ENCODE measurements at regions of chr6 and their contacts with region 1.

Region 1: GRCh38 chr6:217048-217659 is 75.1 kb upstream of the DUSP22 start:
- DNase-seq: peak; percentile 55
- ATAC-seq: 0 out of 3 replicates have a peak, but pooled peaks have one; percentile 1
- H3K4me3 ChIP-seq: peak overlapping the region; percentile 13; the same call in 1 of the 2 replicates
- H3K27ac ChIP-seq: peak overlapping the region; percentile 94
- H3K4me1 ChIP-seq: peaks cover 86% of the 10 kb centered on the region
- H3K27me3 ChIP-seq: no peaks in the 10 kb centered on the region
- CTCF ChIP-seq: peak; percentile 57 to 73 (median 73)
- EP300 ChIP-seq: no peak
- POLR2A ChIP-seq: no peak
- RAD21 ChIP-seq: peak; percentile 54

Region 2: DNA sequence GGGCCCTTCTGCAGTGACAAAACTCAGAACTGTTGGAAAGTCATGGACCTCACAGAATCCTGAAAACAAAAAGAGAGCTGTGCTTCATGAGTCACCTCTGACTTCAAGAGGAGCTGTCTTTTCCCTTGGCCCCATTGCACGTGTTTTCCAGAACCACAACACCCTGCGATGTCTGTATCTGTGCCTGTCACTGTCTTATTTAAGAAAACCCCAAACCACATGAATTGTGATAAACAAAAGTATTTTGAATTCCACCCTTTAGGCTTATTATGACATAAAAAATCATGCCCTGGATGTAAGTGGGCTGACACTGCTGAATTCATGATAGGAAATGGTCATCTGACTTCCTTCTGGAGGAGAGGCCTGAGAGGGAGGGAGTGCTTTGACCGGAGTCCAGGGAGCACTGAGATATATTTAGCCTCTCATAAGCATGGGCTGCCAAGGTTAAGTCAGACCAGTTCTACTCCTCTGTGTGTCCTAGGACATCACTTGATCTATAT is 21.2 kb before region 1 on chr6:
- CTCF ChIA-PET with region 1: interaction called, 460 read pairs
- POLR2A ChIA-PET with region 1: interaction called, 139 read pairs
- RAD21 ChIA-PET with region 1: interaction called, 519 read pairs
- SMC1A ChIA-PET with region 1: interaction called, 748 read pairs
- in situ Hi-C with region 1: no loop called
- intact Hi-C with region 1: no loop called
- DNase-seq: no peak
- ATAC-seq: no peak
- H3K4me3 ChIP-seq: no peak overlapping the region
- H3K27ac ChIP-seq: no peak overlapping the region
- H3K4me1 ChIP-seq: peaks cover 48% of the 10 kb centered on the region
- H3K27me3 ChIP-seq: no peaks in the 10 kb centered on the region
- CTCF ChIP-seq: no peak
- EP300 ChIP-seq: no peak
- POLR2A ChIP-seq: no peak
- RAD21 ChIP-seq: no peak

Region 3: DNA sequence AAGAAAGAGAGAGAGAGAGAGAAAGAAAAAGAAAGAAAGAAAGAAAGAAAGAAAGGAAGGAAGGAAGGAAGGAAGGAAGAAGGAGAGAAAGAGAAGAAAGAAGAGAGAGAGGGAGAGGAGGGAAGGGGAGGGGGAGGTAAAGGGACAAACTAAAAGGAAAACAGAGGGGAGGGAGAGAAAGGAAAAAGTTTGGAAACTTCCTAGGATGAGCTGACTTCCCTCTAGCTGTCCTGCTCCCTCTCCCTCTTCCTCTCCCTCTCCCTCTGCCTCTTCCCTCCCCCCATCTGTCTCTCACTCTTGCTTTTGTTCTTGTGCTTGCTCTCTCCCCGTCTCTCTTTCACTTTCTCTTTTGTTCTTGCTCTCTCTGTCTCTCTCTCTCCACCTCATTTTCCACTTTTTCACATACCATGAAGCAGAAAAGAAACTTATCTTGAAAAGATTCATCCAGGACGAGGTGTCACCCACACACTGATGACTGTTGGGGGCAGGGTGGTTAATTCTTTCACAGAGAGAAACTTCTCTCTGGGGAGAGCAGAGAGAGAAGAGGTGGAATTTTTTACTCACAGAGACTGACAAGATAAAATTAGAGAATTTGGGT is 18.7 kb after region 1 on chr6:
- CTCF ChIA-PET with region 1: interaction called, 7 read pairs
- POLR2A ChIA-PET with region 1: interaction called, 6 read pairs
- RAD21 ChIA-PET with region 1: interaction called, 119 read pairs
- SMC1A ChIA-PET with region 1: interaction called, 22 read pairs
- in situ Hi-C with region 1: no loop called
- intact Hi-C with region 1: no loop called
- DNase-seq: peak; percentile 85
- ATAC-seq: peak; percentile 78
- H3K4me3 ChIP-seq: peak overlapping the region; percentile 16; the same call in 1 of the 2 replicates
- H3K27ac ChIP-seq: peak overlapping the region; percentile 87
- H3K4me1 ChIP-seq: peaks cover 51% of the 10 kb centered on the region
- H3K27me3 ChIP-seq: no peaks in the 10 kb centered on the region
- CTCF ChIP-seq: no peak
- EP300 ChIP-seq: peak in 1 of 2 experiments; percentile 73; a peak in 2 of 4 replicates
- POLR2A ChIP-seq: no peak
- RAD21 ChIP-seq: peak; percentile 37; the same call in 1 of the 2 replicates

Region 4: GRCh38 chr6:291697-292505 is 74.7 kb after region 1 on chr6 and contains the start of gene DUSP22:
- CTCF ChIA-PET with region 1: interaction called, 5 read pairs
- POLR2A ChIA-PET with region 1: interaction called, 11 read pairs
- RAD21 ChIA-PET with region 1: interaction called, 16 read pairs
- SMC1A ChIA-PET with region 1: interaction called, 19 read pairs
- in situ Hi-C with region 1: no loop called
- intact Hi-C with region 1: no loop called
- DNase-seq: peak; percentile 81
- ATAC-seq: peak; percentile 45
- H3K4me3 ChIP-seq: peak within 1 kb of the TSS; percentile 78
- H3K27ac ChIP-seq: peak within 1 kb of the TSS; percentile 100
- H3K4me1 ChIP-seq: peaks cover 64% of the 10 kb centered on the region
- H3K27me3 ChIP-seq: no peaks in the 10 kb centered on the region
- CTCF ChIP-seq: no peak
- EP300 ChIP-seq: peak; percentile 53 to 76; a peak in 2 of 4 replicates
- POLR2A ChIP-seq: no peak
- RAD21 ChIP-seq: peak; percentile 42
- polyA plus RNA-seq, gene DUSP22: 93.4 to 99.7 TPM

Region 5: DNA sequence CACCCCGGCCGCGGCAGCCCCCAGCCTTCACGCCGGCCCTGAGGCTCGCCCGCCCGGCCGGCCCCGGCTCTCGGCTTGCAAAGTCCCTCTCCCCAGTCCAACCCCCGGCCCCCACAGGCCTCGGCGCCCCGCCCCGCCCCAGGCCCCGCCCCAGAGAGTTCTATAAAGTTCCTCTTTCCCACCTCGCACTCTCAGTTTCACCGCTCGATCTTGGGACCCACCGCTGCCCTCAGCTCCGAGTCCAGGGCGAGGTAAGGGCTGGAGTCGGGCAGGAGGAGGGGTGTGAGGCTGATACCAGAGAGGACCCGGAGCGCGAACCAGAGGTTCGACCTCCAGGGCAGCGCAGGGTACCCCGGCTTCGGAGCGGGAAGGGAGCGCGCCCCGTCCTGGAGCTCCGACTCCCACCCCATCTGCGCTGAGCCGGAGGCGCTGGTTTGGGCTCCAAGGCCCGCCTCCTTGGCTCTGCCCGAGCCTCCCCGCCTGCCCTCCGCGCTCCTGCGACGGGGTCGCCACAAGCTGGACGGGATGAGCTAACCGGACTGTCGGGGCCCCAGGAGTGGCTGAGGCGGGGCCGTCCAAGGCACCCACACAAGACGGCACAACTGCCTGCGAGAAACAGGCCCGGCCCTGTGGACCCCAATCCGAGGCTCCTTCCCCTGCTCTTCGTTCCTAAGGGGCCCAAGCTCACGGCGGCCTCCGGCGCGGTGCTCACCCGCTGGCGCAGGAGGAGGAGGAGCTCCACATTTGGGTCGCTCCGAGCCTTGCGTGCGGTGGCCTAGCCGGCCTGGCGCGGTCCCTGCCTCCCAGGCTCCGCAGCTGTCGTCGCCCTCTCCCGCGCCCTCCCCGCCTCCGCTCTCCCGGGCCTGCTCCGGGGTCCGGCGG is 174.6 kb after region 1 on chr6 and contains the start of gene IRF4:
- CTCF ChIA-PET with region 1: interaction called, 4 read pairs
- POLR2A ChIA-PET with region 1: interaction called, 5 read pairs
- RAD21 ChIA-PET with region 1: interaction called, 13 read pairs
- SMC1A ChIA-PET with region 1: interaction called, 185 read pairs
- in situ Hi-C with region 1: loop called (anchors 10 kb)
- intact Hi-C with region 1: no loop called
- DNase-seq: no peak
- ATAC-seq: peak; percentile 63
- H3K4me3 ChIP-seq: peak within 1 kb of the TSS; percentile 95
- H3K27ac ChIP-seq: peak within 1 kb of the TSS; percentile 97
- H3K4me1 ChIP-seq: peaks cover 33% of the 10 kb centered on the region
- H3K27me3 ChIP-seq: no peaks in the 10 kb centered on the region
- CTCF ChIP-seq: no peak
- EP300 ChIP-seq: no peak
- POLR2A ChIP-seq: peak; percentile 77
- RAD21 ChIP-seq: peak; percentile 25; the same call in 1 of the 2 replicates
- polyA plus RNA-seq, gene IRF4: 50.0 to 98.9 TPM

Region 6: DNA sequence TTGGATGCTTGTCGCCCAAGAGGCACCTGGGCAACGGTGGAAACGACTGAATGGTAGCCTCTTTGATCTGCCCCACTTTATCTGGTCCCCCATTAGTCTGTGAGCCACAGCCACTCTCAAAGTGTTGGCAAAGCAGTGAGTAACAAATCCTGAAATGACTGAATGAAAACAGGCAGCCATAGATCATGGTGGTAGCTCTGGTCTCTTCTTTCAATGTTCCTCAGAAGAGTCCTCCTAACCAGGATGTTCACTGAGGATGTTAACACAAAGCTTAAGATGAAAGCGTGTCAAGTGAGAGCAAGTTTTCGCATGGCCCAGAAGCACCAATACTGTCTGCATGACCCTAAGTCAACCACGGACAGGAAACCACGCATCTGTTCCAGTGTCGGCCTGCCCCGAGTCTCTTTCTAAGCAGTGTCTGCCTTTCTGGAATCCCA is 281.7 kb after region 1 on chr6:
- CTCF ChIA-PET with region 1: interaction called, 3 read pairs
- POLR2A ChIA-PET with region 1: no interaction called
- RAD21 ChIA-PET with region 1: interaction called, 3 read pairs
- SMC1A ChIA-PET with region 1: interaction called, 3 read pairs
- in situ Hi-C with region 1: no loop called
- intact Hi-C with region 1: loop called (anchors 10 kb)
- DNase-seq: peak; percentile 69
- ATAC-seq: peak; percentile 77
- H3K4me3 ChIP-seq: peak overlapping the region; percentile 31; the same call in 1 of the 2 replicates
- H3K27ac ChIP-seq: peak overlapping the region; percentile 78
- H3K4me1 ChIP-seq: peaks cover 36% of the 10 kb centered on the region
- H3K27me3 ChIP-seq: no peaks in the 10 kb centered on the region
- CTCF ChIP-seq: no peak
- EP300 ChIP-seq: no peak
- POLR2A ChIP-seq: no peak
- RAD21 ChIP-seq: no peak

Measured in GM12878 (cell line).